ENCODE measurements at regions of chr16 and their contacts with region 1.

Region 1: DNA sequence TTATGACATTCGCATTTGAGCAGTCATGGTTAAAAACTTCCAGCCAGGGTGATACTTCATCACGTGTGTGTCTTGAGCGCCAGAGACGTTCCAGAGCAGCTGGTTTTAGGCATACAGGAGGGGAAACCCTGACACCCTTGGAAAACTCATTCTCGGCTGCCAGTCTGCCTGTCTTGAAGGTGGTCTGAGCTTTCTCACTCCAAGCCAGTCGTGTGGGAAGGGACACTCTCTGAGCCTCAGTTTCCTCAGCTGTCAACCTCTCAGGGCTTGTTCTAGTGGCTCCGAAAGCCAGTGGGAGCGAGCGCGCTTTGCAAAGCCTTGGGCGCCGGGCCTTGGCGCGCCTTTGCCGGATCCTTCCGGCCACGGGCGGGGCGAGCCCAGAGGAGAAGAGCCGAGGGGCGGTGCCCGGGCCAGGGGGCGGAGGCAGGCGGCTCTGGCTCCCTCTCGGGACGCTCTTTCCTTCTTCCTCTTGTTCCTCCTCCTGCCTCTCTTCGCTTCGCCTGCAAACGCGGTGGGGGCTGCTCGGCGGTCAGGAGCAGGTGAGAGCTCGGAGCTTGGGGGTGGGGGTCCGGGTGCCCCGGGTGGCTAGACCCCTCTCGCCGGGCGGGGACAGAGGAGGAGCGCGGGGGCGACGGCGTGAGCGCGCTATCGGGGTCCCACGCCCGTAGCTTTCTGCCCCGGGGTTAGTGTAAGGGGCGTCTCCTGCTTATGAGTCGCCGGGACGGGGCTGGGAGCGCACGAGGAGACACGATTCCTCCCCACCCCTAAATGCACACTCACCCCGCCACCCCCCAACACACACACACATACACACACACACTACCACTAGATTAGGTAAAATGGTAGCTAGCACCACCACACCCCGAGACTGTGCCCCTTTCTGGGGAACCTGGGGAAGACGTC is at the start of gene LDAF1:
- DNase-seq: peak; percentile 93
- ATAC-seq: peak; percentile 94
- total RNA-seq, gene LDAF1: 129 TPM

Region 2: DNA sequence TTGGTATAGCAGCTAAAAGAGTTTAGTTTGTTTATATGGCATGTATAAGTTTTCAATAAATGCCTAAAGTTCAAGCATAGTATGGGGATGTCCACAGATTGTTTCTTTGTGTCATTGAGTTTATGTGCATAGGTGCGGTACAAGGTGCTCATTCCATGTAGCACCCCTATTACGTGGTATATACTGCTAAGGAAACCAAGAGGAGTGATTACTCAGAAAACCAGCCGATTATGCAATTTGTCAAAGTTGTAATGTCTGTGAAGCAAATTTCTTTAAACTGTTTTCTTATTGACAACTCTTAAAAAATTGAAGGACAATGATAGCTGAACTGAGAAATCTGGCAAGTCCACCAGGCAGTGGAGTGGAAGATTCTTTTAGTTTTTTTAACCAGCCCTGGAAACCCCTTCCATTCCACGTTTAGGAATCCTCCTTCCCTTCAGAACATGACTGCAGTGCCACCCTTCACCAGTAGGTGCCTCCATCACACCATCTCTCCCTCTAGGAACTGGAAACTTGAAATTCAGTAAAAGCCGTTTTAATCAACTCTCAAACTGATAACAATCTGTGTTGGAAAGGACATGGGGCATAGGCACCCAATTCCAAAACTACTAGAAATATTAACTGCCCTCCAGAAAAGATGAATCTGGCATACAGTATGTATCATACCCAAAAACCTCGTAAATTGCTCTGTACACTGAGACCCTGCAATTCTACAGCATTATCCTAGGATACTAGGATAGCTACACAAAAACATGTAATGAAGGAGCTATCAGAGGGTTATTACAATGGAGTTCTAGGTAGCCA is 308.7 kb before region 1 on chr16:
- intact Hi-C with region 1: loop called (anchors 5 kb)
- DNase-seq: no peak
- ATAC-seq: no peak

Region 3: GRCh38 chr16:21001262-21001661 is 157.2 kb before region 1 on chr16:
- intact Hi-C with region 1: no loop called
- DNase-seq: no peak
- ATAC-seq: no peak

Region 4: GRCh38 chr16:21179126-21179982 is 20.9 kb after region 1 on chr16:
- intact Hi-C with region 1: no loop called
- DNase-seq: no peak
- ATAC-seq: peak; percentile 76

Region 5: GRCh38 chr16:21277927-21278706 is 119.7 kb after region 1 on chr16 and contains the start of gene CRYM:
- intact Hi-C with region 1: loop called (anchors 5 kb)
- DNase-seq: peak; percentile 86
- ATAC-seq: peak; percentile 95
- total RNA-seq, gene CRYM: 63.3 TPM

Region 6: DNA sequence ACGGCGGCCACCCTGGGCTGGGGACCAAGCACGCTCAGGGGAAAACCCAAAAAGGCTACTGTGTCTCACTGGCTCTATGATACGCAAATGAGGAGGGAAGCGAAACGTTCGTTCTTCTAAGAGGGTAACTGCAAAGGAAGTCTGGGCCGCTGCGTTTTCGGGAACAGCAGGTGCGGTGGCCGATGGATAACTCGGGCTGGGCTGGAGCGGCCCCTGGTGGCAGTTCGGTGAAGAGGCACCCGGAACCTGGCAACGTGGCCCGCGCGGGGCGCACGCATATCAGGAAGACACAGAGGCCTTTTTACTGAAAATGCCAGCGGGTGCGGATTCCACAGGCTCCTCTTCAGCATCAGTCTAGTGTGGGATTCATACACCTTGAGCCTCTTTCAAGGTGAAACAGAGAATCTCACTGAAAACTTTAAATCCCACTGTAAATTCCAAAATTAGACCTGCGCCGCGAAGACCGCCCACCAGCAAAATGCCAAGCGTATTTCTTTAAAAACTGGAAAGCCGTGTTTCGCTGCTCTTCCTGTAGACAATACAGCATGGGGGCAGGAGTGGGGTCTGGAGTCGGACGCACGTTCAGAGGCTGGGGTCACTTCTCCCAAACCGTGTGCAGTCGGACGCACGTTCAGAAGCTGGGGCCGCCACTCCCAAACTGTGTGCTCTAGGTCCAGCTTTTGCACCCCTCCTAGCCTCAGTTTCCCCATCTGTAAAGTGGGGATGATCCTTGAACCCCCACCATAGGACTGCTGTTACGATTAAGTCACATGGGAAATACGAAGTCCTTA is 396.5 kb after region 1 on chr16:
- intact Hi-C with region 1: loop called (anchors 10 kb)
- DNase-seq: peak; percentile 97
- ATAC-seq: peak; percentile 76

Region 7: DNA sequence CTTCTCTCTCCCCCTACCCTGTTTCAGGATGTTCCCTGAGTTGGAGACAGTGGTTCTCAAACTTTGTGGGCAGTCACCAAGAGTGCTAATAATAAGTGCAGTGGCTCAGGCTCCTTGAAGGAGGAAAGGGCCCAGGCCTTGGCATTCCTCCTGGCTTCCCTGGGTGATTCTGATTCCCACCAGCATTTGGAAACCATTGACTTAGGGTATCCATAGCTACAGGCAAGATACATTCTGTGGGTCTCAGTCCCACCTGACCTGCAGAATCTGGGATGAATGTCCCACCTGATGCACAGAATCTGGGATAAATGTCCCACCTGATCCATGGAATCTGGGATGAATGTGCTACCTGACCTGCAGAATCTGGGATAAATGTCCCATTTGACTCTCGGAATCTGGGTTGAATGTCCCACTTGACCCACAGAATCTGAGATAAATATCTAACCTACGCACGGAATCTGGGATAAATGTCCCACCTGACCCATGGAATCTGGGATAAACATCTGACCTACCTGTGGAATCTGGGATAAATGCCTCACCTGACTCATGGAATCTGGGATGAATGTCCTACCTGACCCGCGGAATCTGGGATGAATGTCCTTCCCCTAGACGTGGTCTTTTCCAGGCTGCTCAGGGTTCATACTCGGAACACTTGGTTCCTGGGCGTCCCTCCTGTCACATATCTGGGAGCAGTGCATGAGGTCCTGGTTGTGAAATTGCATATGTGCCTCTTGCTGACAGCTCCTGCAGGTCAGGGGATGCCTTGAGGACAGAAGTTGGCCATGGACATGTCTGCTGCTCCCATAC is 1518.8 kb after region 1 on chr16:
- intact Hi-C with region 1: loop called (anchors 5 kb)
- DNase-seq: no peak
- ATAC-seq: peak; percentile 37

Measured in Right ventricle myocardium inferior (tissue), 1 donor.